Activated B cell treated with CpG ODN at 0.5 μM for 24 hours (primary cell): ENCODE measurements at regions of chr6 and their contacts with region 1.

Region 1: DNA sequence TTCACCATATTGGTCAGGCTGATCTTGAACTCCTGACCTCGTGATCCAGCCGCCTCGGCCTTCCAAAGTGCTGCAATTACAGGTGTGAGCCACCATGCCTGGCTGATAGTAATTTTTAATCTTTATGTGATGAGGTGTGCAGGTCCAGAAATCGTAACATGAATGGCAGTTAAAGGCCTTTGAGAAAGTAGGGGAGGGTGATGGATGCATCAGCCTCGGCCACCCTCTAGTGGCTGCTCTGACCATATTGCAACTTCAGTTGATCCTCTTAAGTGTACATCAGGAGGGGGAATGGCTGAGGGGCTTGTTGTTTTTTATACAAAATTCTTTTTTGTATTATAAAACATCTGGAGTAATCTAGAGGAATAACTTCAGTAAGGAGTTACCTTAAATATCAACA is 193.0 kb downstream of the ZFAND3 start:
- DNase-seq: no peak
- ATAC-seq: peak; percentile 89
- H3K4me3 Mint-ChIP-seq: no peak overlapping the region
- H3K27ac Mint-ChIP-seq: no peak overlapping the region
- H3K4me1 Mint-ChIP-seq: peaks cover 33% of the 10 kb centered on the region
- H3K27me3 Mint-ChIP-seq: no peaks in the 10 kb centered on the region
- CTCF ChIP-seq: no peak

Region 2: GRCh38 chr6:37483917-37484785 is 528.4 kb before region 1 on chr6:
- CTCF ChIA-PET with region 1: no interaction called
- POLR2A ChIA-PET with region 1: no interaction called
- intact Hi-C with region 1: loop called (anchors 1 kb)
- DNase-seq: peak; percentile 72
- ATAC-seq: peak; percentile 97
- H3K4me3 Mint-ChIP-seq: no peak overlapping the region
- H3K27ac Mint-ChIP-seq: no peak overlapping the region
- H3K4me1 Mint-ChIP-seq: peaks cover 3% of the 10 kb centered on the region
- H3K27me3 Mint-ChIP-seq: no peaks in the 10 kb centered on the region
- CTCF ChIP-seq: no peak

Region 3: GRCh38 chr6:37566111-37566949 is 446.2 kb before region 1 on chr6:
- CTCF ChIA-PET with region 1: no interaction called
- POLR2A ChIA-PET with region 1: no interaction called
- intact Hi-C with region 1: loop called (anchors 1 kb)
- DNase-seq: peak; percentile 77
- ATAC-seq: peak; percentile 65
- H3K4me3 Mint-ChIP-seq: peak overlapping the region; percentile 60
- H3K27ac Mint-ChIP-seq: no peak overlapping the region
- H3K4me1 Mint-ChIP-seq: peaks cover 63% of the 10 kb centered on the region
- H3K27me3 Mint-ChIP-seq: no peaks in the 10 kb centered on the region
- CTCF ChIP-seq: no peak

Region 4: GRCh38 chr6:37705239-37706051 is 307.1 kb before region 1 on chr6:
- CTCF ChIA-PET with region 1: interaction called, 4 read pairs
- POLR2A ChIA-PET with region 1: no interaction called
- intact Hi-C with region 1: loop called (anchors 1 kb)
- DNase-seq: peak; percentile 72
- ATAC-seq: peak; percentile 91
- H3K4me3 Mint-ChIP-seq: peak overlapping the region; percentile 86
- H3K27ac Mint-ChIP-seq: peak overlapping the region; percentile 71
- H3K4me1 Mint-ChIP-seq: peaks cover 24% of the 10 kb centered on the region
- H3K27me3 Mint-ChIP-seq: no peaks in the 10 kb centered on the region
- CTCF ChIP-seq: no peak

Region 5: GRCh38 chr6:37860226-37860839 is 152.2 kb before region 1 on chr6:
- CTCF ChIA-PET with region 1: no interaction called
- POLR2A ChIA-PET with region 1: no interaction called
- intact Hi-C with region 1: loop called (anchors 5 kb)
- DNase-seq: no peak
- ATAC-seq: no peak
- H3K4me3 Mint-ChIP-seq: no peak overlapping the region
- H3K27ac Mint-ChIP-seq: no peak overlapping the region
- H3K4me1 Mint-ChIP-seq: peaks cover 31% of the 10 kb centered on the region
- H3K27me3 Mint-ChIP-seq: no peaks in the 10 kb centered on the region
- CTCF ChIP-seq: no peak

Region 6: DNA sequence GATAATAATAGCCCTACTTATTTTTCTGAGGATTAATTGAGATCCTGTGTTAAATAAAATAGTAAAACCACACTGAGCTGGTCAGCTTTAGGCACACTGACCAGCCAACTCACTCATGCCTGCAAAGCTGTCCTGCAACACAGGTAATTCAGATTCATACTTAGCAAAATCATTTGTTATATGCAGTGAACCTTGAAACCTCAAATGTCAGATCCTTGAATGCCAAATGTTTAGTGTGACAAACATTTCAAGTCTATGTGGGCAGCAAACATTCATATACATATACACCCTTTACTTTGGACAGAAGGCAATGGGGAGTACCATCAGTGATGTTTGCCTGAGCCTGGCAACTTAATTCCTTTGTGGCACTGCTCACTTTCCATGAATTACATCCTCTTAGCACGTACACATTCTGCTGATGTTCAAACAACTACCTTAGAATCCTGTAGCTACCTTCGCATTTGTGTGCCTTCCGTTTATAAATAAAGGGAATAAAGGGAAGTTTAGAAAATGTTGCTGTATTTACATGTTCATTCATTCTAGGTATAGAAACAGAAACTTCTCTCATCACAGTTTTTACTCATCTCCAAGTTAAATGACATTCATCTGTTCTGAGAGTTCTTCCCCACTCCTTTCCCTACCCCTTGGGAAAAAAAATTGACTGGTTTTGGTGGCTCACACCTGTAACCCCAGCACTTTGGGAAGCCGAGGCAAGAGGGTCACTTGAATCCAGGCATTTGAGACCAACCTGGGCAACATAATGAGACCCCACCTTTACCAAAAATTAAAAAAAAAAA is 52.2 kb before region 1 on chr6:
- CTCF ChIA-PET with region 1: no interaction called
- POLR2A ChIA-PET with region 1: no interaction called
- intact Hi-C with region 1: no loop called
- DNase-seq: no peak
- ATAC-seq: no peak
- H3K4me3 Mint-ChIP-seq: no peak overlapping the region
- H3K27ac Mint-ChIP-seq: no peak overlapping the region
- H3K4me1 Mint-ChIP-seq: peaks cover 61% of the 10 kb centered on the region
- H3K27me3 Mint-ChIP-seq: no peaks in the 10 kb centered on the region
- CTCF ChIP-seq: no peak

Region 7: GRCh38 chr6:38030380-38030779 is 17.8 kb after region 1 on chr6:
- CTCF ChIA-PET with region 1: no interaction called
- POLR2A ChIA-PET with region 1: no interaction called
- intact Hi-C with region 1: no loop called
- DNase-seq: no peak
- ATAC-seq: no peak
- H3K4me3 Mint-ChIP-seq: no peak overlapping the region
- H3K27ac Mint-ChIP-seq: no peak overlapping the region
- H3K4me1 Mint-ChIP-seq: peaks cover 56% of the 10 kb centered on the region
- H3K27me3 Mint-ChIP-seq: no peaks in the 10 kb centered on the region
- CTCF ChIP-seq: no peak

Region 8: GRCh38 chr6:38057994-38058393 is 45.4 kb after region 1 on chr6:
- CTCF ChIA-PET with region 1: no interaction called
- POLR2A ChIA-PET with region 1: no interaction called
- intact Hi-C with region 1: no loop called
- DNase-seq: no peak
- ATAC-seq: no peak
- H3K4me3 Mint-ChIP-seq: no peak overlapping the region
- H3K27ac Mint-ChIP-seq: no peak overlapping the region
- H3K4me1 Mint-ChIP-seq: peaks cover 15% of the 10 kb centered on the region
- H3K27me3 Mint-ChIP-seq: no peaks in the 10 kb centered on the region
- CTCF ChIP-seq: no peak